CD4-positive, alpha-beta memory T cell (primary cell): ENCODE measurements at regions of chr11 and their contacts with region 1.

Region 1: DNA sequence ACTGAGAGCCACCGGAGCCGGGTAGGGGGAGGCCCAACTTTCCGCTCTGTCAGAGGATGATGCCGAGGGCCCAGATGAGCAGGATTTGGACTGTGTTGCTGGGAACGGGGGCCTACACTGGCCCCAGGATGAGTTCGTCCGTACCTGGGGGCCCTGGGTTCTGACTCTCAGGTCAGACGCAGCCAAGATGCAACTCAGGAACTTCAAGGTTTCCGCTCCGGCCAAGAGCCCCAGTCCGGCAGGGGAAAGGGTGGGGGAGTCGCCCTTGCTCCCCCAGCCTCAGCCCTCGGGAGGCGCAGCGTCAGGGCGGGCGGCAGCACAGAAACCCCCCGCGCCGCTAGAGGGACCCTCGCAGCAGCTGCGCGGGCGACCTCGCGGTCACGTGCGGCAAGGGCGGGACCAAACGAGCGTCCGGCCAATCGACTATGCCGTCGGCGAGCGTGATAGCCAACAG is 241 bp upstream of the ARL2 start:
- DNase-seq: peak; percentile 89 to 94 (median 90)
- H3K4me3 ChIP-seq: peak overlapping the region; percentile 90 to 97
- H3K4me3 Mint-ChIP-seq: peak overlapping the region; percentile 89 to 97 (median 92)
- H3K27ac ChIP-seq: peak overlapping the region; percentile 98
- H3K27ac Mint-ChIP-seq: peak overlapping the region; percentile 95 to 98 (median 97)
- H3K4me1 ChIP-seq: peaks cover 23% of the 10 kb centered on the region
- H3K4me1 Mint-ChIP-seq: peaks cover 13 to 28% (median 23%) of the 10 kb centered on the region in 4 donors
- H3K27me3 ChIP-seq: no peaks in the 10 kb centered on the region
- H3K27me3 Mint-ChIP-seq: no peaks in the 10 kb centered on the region

Region 2: GRCh38 chr11:64787526-64788320 is 226.0 kb before region 1 on chr11:
- CTCF ChIA-PET with region 1: no interaction called
- POLR2A ChIA-PET with region 1: no interaction called
- intact Hi-C with region 1: loop called (anchors 5 kb)
- DNase-seq: peak; percentile 48 to 61 (median 52)
- H3K4me3 ChIP-seq: no peak overlapping the region
- H3K4me3 Mint-ChIP-seq: no peak overlapping the region
- H3K27ac ChIP-seq: no peak overlapping the region
- H3K27ac Mint-ChIP-seq: peak overlapping the region in 6 of 7 donors; percentile 48 to 90 (median 82)
- H3K4me1 ChIP-seq: peaks cover 6% of the 10 kb centered on the region
- H3K4me1 Mint-ChIP-seq: peaks cover 3 to 6% (median 4%) of the 10 kb centered on the region in 4 donors
- H3K27me3 ChIP-seq: no peaks in the 10 kb centered on the region
- H3K27me3 Mint-ChIP-seq: no peaks in the 10 kb centered on the region

Region 3: DNA sequence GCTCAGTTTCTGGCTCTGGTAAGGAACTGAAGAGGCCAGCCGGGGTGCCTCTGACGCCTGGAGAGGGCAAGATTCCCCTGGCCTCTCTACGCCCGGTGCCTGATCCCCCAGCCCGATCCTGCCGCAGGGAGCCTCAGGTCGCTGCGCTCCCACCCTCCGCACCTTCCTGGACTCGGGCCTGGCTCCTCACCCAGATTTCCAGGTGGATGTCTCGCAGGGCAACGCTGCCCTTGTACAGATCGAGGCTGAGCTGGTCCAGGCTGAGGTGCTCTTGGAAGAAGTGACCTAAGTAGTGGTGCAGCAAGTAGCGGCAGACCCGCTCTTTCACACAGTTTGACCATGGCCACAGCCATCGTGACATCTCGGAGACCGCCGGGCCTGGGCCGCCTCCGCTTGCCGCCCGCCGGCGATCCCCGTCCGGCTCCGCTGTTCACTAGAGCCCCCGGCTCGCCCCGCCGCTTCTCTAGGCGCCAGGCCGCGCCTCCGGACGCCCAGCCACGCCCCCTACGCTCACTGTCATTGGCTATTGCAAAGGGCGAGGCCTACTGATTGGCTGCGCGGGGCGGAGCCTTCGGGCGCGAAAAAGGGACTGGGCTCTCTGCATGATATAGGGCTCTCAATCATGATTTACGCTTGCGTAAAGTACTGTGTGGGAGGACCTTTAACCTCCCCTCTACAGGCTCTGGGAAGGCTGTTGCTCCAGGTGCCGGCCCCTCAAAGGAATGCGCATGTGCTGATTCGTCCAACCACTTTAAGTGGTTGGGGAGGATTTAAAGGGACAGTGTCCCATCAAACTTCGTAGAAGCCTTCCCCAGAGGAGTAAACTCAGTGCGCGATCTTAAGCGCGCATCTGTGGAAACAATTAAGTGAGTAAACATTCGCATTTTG is 96.7 kb before region 1 on chr11 and contains the start of gene ATG2A:
- CTCF ChIA-PET with region 1: no interaction called
- POLR2A ChIA-PET with region 1: no interaction called
- intact Hi-C with region 1: loop called (anchors 2 kb)
- DNase-seq: peak; percentile 98 to 99 (median 99)
- H3K4me3 ChIP-seq: peak within 1 kb of the TSS; percentile 94 to 97
- H3K4me3 Mint-ChIP-seq: peak within 1 kb of the TSS; percentile 91 to 96 (median 93)
- H3K27ac ChIP-seq: peak within 1 kb of the TSS; percentile 88
- H3K27ac Mint-ChIP-seq: peak within 1 kb of the TSS; percentile 93 to 97 (median 96)
- H3K4me1 ChIP-seq: peaks cover 27% of the 10 kb centered on the region
- H3K4me1 Mint-ChIP-seq: peaks cover 15 to 28% (median 23%) of the 10 kb centered on the region in 4 donors
- H3K27me3 ChIP-seq: no peaks in the 10 kb centered on the region
- H3K27me3 Mint-ChIP-seq: no peaks in the 10 kb centered on the region
- total RNA-seq, gene ATG2A: 45.7 to 47.3 TPM

Region 4: GRCh38 chr11:65027213-65028067 is 13.7 kb after region 1 on chr11 and contains the start of gene SNX15:
- CTCF ChIA-PET with region 1: interaction called, 65 read pairs
- POLR2A ChIA-PET with region 1: interaction called, 17 read pairs
- intact Hi-C with region 1: loop called (anchors 1 kb)
- DNase-seq: peak; percentile 94 to 96 (median 95)
- H3K4me3 ChIP-seq: peak within 1 kb of the TSS in 1 of 2 donors; percentile 52
- H3K4me3 Mint-ChIP-seq: peak within 1 kb of the TSS; percentile 69 to 88 (median 81)
- H3K27ac ChIP-seq: peak within 1 kb of the TSS; percentile 61
- H3K27ac Mint-ChIP-seq: peak within 1 kb of the TSS; percentile 88 to 96 (median 91)
- H3K4me1 ChIP-seq: peaks cover 19% of the 10 kb centered on the region
- H3K4me1 Mint-ChIP-seq: peaks cover 9 to 30% (median 17%) of the 10 kb centered on the region in 4 donors
- H3K27me3 ChIP-seq: no peaks in the 10 kb centered on the region
- H3K27me3 Mint-ChIP-seq: no peaks in the 10 kb centered on the region
- total RNA-seq, gene SNX15: 24.5 to 26.7 TPM

Region 5: DNA sequence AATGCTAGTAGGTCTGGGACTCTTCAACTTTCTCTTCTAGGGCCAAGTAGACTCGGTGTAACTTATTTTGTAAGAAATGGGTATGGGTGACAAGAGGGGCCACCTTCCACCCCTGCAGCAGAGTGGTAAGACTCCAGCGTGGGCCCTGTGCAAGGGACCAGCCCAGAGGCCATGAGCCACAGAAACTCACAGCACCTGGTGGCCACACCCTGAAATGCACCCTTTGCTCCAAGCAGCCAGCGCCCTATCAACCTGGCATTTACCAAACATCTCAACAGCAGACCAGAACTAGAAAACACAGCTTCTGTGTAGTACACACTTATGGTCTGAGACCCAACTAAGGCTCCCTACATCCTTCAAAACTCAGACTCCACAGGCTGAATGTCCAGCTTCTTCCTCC is 64.4 kb after region 1 on chr11:
- CTCF ChIA-PET with region 1: interaction called, 57 read pairs
- POLR2A ChIA-PET with region 1: interaction called, 5 read pairs
- intact Hi-C with region 1: loop called (anchors 1 kb)
- DNase-seq: peak; percentile 71 to 75 (median 72)
- H3K4me3 ChIP-seq: no peak overlapping the region
- H3K4me3 Mint-ChIP-seq: peak overlapping the region in 2 of 8 donors; percentile 9 to 30
- H3K27ac ChIP-seq: peak overlapping the region; percentile 35
- H3K27ac Mint-ChIP-seq: peak overlapping the region; percentile 42 to 93 (median 81)
- H3K4me1 ChIP-seq: peaks cover 18% of the 10 kb centered on the region
- H3K4me1 Mint-ChIP-seq: peaks cover 4 to 22% (median 12%) of the 10 kb centered on the region in 4 donors
- H3K27me3 ChIP-seq: no peaks in the 10 kb centered on the region
- H3K27me3 Mint-ChIP-seq: no peaks in the 10 kb centered on the region

Region 6: GRCh38 chr11:65095974-65096806 is 82.5 kb after region 1 on chr11 and contains the start of gene VPS51:
- CTCF ChIA-PET with region 1: interaction called, 6 read pairs
- POLR2A ChIA-PET with region 1: interaction called, 21 read pairs
- intact Hi-C with region 1: no loop called
- DNase-seq: peak; percentile 87 to 92 (median 89)
- H3K4me3 ChIP-seq: peak within 1 kb of the TSS; percentile 47 to 74
- H3K4me3 Mint-ChIP-seq: peak within 1 kb of the TSS; percentile 86 to 95 (median 93)
- H3K27ac ChIP-seq: peak within 1 kb of the TSS; percentile 78
- H3K27ac Mint-ChIP-seq: peak within 1 kb of the TSS; percentile 95 to 97 (median 96)
- H3K4me1 ChIP-seq: peaks cover 18% of the 10 kb centered on the region
- H3K4me1 Mint-ChIP-seq: peaks cover 8 to 26% (median 17%) of the 10 kb centered on the region in 4 donors
- H3K27me3 ChIP-seq: no peaks in the 10 kb centered on the region
- H3K27me3 Mint-ChIP-seq: no peaks in the 10 kb centered on the region
- total RNA-seq, gene VPS51: 221 to 226 TPM

Region 7: DNA sequence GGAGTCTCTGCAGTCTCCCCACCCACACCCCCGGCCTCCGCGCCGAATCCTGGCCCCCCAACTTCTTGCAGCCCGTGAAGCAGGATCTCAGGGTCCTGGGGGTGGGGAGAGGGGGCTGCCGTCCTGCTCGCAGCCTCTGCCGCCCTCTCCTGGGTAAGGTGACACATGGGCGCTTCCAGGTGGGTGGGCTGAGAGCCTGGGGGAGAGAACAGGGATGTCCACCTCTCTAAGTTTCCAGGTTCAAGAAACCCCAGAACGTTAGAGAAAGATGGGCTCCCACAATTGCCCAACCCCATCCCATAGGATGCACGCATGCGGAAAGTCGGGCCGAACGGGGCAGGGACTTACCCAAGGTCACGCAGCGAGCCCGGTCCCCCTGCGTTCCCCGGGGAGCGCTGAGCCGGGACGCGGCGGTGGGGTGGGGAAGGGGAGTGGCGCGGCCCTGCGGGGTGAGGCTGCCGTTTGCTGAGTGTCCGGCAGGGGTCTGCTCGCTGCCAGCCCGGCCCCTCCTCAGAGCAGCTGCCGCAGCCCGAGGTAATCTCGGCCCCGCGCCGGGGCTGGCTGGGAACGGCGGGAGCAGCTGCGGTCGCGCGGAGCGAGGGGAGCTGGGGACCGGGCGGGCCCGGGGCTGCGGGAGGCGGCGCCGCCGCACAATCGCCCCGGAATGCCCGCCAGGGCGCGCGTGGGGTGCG is 167.3 kb after region 1 on chr11:
- CTCF ChIA-PET with region 1: interaction called, 5 read pairs
- POLR2A ChIA-PET with region 1: interaction called, 4 read pairs
- intact Hi-C with region 1: loop called (anchors 1 kb)
- DNase-seq: peak; percentile 48 to 70 (median 54)
- H3K4me3 ChIP-seq: peak overlapping the region; percentile 61 to 70
- H3K4me3 Mint-ChIP-seq: peak overlapping the region; percentile 89 to 93 (median 90)
- H3K27ac ChIP-seq: peak overlapping the region; percentile 52
- H3K27ac Mint-ChIP-seq: peak overlapping the region in 6 of 7 donors; percentile 79 to 94 (median 87)
- H3K4me1 ChIP-seq: peaks cover 36% of the 10 kb centered on the region
- H3K4me1 Mint-ChIP-seq: peaks cover 11 to 37% (median 22%) of the 10 kb centered on the region in 4 donors
- H3K27me3 ChIP-seq: no peaks in the 10 kb centered on the region
- H3K27me3 Mint-ChIP-seq: no peaks in the 10 kb centered on the region